Activated naive CD4-positive, alpha-beta T cell treated with anti-CD3 and anti-CD28 coated beads for 36 hours (primary cell): ENCODE measurements at regions of chr1 and their contacts with region 1.

Region 1: DNA sequence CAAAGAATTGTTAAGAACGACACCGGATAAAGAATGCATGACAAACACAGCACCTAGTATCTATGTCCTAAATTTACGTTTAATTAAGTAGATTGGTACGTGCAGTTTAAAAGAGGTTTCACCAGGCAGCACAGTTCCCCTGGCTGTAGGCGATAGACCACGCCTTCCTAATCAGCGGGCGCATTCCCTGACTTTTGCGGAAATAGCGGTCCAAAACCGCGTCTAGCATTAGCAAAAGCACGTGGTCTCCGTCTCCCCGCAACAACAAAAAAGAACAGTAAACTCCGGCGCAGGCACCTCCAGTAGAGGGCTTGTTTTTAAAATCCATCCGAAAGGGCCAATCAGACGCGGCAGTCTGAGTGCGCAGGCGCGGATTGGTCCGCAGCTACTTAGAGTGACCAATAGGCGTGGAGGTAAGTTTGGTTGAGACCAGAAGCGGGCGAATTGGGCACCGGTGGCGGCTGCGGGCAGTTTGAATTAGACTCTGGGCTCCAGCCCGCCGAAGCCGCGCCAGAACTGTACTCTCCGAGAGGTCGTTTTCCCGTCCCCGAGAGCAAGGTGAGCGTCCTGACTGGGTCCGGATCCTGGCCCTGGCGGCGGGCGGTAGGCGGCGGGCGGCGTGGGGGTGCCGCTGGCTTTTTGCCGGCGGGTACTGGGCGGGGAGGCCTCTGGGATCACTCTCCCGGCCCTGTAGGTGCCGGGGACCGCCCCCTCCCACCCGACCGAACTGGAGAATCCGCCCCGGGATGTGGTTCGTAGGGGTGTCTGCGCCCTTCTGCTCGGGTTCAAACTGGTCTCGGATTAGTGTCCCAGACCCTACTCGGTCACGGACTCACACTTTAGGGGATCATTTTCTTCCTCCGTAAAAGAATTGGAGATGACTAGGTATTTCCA is at the start of gene CENPF:
- DNase-seq: peak; percentile 97
- H3K4me3 Mint-ChIP-seq: peak within 1 kb of the TSS; percentile 97
- H3K27ac Mint-ChIP-seq: peak within 1 kb of the TSS; percentile 90
- H3K4me1 Mint-ChIP-seq: peaks cover 8% of the 10 kb centered on the region
- H3K27me3 Mint-ChIP-seq: no peaks in the 10 kb centered on the region
- total RNA-seq, gene CENPF: 116 to 128 TPM

Region 2: GRCh38 chr1:214281021-214281719 is 321.8 kb before region 1 on chr1 and contains the start of gene SMYD2:
- CTCF ChIA-PET with region 1: no interaction called
- intact Hi-C with region 1: loop called (anchors 2 kb)
- DNase-seq: peak; percentile 66
- H3K4me3 Mint-ChIP-seq: peak within 1 kb of the TSS; percentile 87
- H3K27ac Mint-ChIP-seq: peak within 1 kb of the TSS; percentile 74
- H3K4me1 Mint-ChIP-seq: peaks cover 40% of the 10 kb centered on the region
- H3K27me3 Mint-ChIP-seq: no peaks in the 10 kb centered on the region
- total RNA-seq, gene SMYD2: 33.4 to 38.4 TPM

Region 3: GRCh38 chr1:214617843-214618242 is 14.8 kb after region 1 on chr1:
- CTCF ChIA-PET with region 1: interaction called, 3 read pairs
- intact Hi-C with region 1: loop called (anchors 2 kb)
- DNase-seq: no peak
- H3K4me3 Mint-ChIP-seq: no peak overlapping the region
- H3K27ac Mint-ChIP-seq: no peak overlapping the region
- H3K4me1 Mint-ChIP-seq: peaks cover 10% of the 10 kb centered on the region
- H3K27me3 Mint-ChIP-seq: no peaks in the 10 kb centered on the region

Region 4: GRCh38 chr1:214637722-214638458 is 34.9 kb after region 1 on chr1:
- CTCF ChIA-PET with region 1: no interaction called
- intact Hi-C with region 1: loop called (anchors 1 kb)
- DNase-seq: peak; percentile 32
- H3K4me3 Mint-ChIP-seq: no peak overlapping the region
- H3K27ac Mint-ChIP-seq: peak overlapping the region; percentile 37
- H3K4me1 Mint-ChIP-seq: peaks cover 38% of the 10 kb centered on the region
- H3K27me3 Mint-ChIP-seq: no peaks in the 10 kb centered on the region

Region 5: GRCh38 chr1:215566556-215567490 is 963.8 kb after region 1 on chr1 and contains the start of gene KCTD3:
- CTCF ChIA-PET with region 1: no interaction called
- intact Hi-C with region 1: loop called (anchors 2 kb)
- DNase-seq: peak; percentile 72
- H3K4me3 Mint-ChIP-seq: peak within 1 kb of the TSS; percentile 93
- H3K27ac Mint-ChIP-seq: peak within 1 kb of the TSS; percentile 50
- H3K4me1 Mint-ChIP-seq: peaks cover 24% of the 10 kb centered on the region
- H3K27me3 Mint-ChIP-seq: peaks cover 10% of the 10 kb centered on the region
- total RNA-seq, gene KCTD3: 3.2 to 3.5 TPM